Activated naive CD4-positive, alpha-beta T cell treated with anti-CD3 and anti-CD28 coated beads for 36 hours (primary cell): ENCODE measurements at regions of chr19 and their contacts with region 1.

Region 1: GRCh38 chr19:19663256-19664038 is at the start of gene ATP13A1:
- DNase-seq: peak; percentile 93
- H3K4me3 Mint-ChIP-seq: peak within 1 kb of the TSS; percentile 95
- H3K27ac Mint-ChIP-seq: peak within 1 kb of the TSS; percentile 97
- H3K4me1 Mint-ChIP-seq: peaks cover 34% of the 10 kb centered on the region
- H3K27me3 Mint-ChIP-seq: no peaks in the 10 kb centered on the region
- total RNA-seq, gene ATP13A1: 48.7 to 55.1 TPM

Region 2: GRCh38 chr19:19591133-19591825 is 72.2 kb before region 1 on chr19:
- CTCF ChIA-PET with region 1: no interaction called
- intact Hi-C with region 1: loop called (anchors 1 kb)
- DNase-seq: peak; percentile 91
- H3K4me3 Mint-ChIP-seq: peak overlapping the region; percentile 47
- H3K27ac Mint-ChIP-seq: peak overlapping the region; percentile 93
- H3K4me1 Mint-ChIP-seq: peaks cover 71% of the 10 kb centered on the region
- H3K27me3 Mint-ChIP-seq: no peaks in the 10 kb centered on the region

Region 3: DNA sequence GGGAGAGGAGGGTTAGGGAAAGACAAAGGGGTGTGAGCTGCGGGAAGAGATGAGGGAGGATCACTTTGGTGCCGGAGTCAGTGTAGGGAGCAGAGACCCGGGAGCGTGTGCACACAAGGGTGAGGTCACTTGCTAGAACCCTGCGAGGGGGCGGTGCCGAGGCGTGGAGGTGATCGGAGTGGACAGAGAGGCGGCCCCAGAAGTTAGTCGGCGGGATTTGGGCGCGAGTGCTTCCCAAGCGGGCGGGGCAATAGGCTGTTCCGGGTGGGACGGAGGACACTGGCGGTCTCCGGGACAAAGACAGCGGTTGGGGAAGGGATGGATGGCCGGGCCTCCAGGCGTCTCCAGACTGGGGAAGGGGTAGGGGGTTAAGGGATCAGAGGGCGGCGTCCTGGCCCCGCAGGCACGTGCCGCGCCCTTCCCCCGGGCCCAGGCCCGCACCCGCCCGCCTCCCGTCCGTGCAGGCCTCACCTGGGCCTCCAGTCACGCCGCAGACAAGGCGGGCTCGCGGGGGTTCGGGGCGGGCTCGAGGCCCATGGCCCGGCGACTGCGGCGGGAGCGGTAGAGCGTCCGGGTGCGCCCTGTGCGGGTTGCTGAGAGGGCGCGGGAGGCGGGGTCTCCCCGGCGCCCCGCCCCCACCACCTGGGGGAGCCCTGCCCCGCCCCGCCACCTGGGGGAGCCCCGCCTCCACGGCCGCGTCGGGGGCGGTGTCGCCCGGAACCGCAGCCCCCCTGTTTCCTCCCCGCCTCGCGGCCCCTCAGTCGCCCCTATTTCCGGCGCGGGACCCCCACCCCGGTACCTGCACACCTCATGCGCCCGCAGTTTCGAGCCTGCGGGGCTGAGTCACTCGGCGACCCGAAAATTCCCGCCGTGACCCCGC is 35.6 kb before region 1 on chr19 and contains the start of gene LPAR2:
- CTCF ChIA-PET with region 1: no interaction called
- intact Hi-C with region 1: loop called (anchors 1 kb)
- DNase-seq: peak; percentile 65
- H3K4me3 Mint-ChIP-seq: peak within 1 kb of the TSS; percentile 89
- H3K27ac Mint-ChIP-seq: peak within 1 kb of the TSS; percentile 85
- H3K4me1 Mint-ChIP-seq: peaks cover 29% of the 10 kb centered on the region
- H3K27me3 Mint-ChIP-seq: no peaks in the 10 kb centered on the region
- total RNA-seq, gene LPAR2: 20.2 to 20.7 TPM

Region 4: DNA sequence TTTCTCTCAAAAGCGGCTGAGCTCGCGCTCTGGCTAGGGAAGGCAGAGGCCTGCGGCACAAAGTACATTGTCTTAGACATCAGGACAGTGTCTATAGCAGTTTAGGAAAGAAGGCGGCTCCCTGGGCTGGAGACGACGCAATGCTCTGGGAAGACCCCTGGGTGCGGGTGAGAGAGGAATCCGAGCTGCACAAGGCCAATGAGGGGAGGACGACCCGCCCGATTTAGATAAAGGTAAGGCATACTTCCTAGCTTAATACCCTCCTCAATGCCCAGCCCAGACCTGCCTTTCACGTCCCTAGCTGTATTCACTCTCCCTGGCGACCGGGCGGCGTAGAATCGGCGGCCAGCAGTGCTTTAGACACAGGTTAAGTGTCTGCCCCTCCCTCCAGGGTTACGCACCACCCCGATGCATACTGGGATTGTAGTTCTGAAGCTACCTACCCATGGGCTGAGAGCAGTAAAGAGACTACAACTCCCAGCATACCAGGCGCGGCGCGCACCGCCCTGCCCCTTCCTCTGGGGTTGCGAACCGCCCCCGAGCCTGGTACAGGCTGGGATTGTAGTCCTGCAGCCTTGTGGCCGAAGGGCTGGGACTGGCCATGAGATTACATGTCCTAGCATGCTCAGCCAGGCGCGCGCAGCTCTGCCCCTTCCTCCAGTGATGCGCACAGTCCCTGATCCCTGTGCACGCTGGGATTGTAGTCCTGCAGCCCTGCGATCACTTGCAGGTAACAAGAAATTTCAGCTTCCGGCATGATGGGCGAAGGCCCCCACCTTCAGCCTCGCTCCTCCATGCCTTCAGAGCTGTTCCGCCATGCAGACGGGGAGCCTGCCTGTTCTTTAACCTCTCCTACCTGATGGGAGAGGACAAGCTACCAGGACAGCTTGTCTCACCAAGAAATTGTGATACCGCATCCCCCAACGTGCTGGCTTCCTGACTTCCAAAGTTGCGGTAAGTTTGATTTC is 112.9 kb after region 1 on chr19:
- CTCF ChIA-PET with region 1: no interaction called
- intact Hi-C with region 1: loop called (anchors 1 kb)
- DNase-seq: peak; percentile 95
- H3K4me3 Mint-ChIP-seq: peak overlapping the region; percentile 90
- H3K27ac Mint-ChIP-seq: peak overlapping the region; percentile 90
- H3K4me1 Mint-ChIP-seq: peaks cover 44% of the 10 kb centered on the region
- H3K27me3 Mint-ChIP-seq: no peaks in the 10 kb centered on the region

Region 5: DNA sequence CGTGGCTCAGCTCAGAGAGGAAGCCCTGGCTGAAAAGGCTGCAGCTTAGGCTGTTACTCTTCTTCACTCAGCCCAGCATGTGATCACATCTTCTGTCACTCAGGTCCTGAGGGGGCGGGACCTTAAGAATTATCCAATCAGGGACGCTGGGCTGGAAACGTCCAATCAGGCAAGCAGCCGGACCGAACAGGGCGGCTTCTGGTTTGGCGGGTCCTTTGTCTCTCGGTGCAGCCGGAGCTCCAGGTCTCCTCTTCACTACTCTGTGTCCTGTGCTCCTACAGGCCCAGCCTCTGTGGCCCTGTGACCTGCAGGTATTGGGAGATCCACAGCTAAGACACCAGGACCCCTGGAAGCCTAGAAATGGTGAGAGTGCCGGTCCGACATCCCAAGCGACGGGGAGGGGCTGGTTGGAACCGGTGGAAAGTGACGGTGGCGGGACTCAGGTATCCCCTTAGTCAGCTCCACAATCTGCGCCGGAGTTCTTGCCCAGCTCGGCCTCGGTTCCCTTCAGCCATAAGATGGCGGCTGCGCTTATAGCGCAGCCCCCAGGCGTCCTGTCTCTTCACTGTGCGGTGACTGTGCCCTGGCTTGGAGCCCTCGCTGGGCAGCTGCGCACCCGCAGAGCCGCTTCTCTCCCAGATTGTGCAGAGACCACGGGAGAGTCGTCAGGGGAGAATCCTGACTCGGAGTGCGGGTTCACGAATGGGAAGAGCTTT is 237.4 kb after region 1 on chr19 and contains the start of gene ZNF93:
- CTCF ChIA-PET with region 1: interaction called, 4 read pairs
- intact Hi-C with region 1: loop called (anchors 2 kb)
- DNase-seq: peak; percentile 98
- H3K4me3 Mint-ChIP-seq: peak within 1 kb of the TSS; percentile 97
- H3K27ac Mint-ChIP-seq: peak within 1 kb of the TSS; percentile 95
- H3K4me1 Mint-ChIP-seq: peaks cover 28% of the 10 kb centered on the region
- H3K27me3 Mint-ChIP-seq: no peaks in the 10 kb centered on the region
- total RNA-seq, gene ZNF93: 15.2 to 16.6 TPM

Region 6: GRCh38 chr19:20051841-20052768 is 388.7 kb after region 1 on chr19:
- CTCF ChIA-PET with region 1: no interaction called
- intact Hi-C with region 1: loop called (anchors 5 kb)
- DNase-seq: peak; percentile 87
- H3K4me3 Mint-ChIP-seq: peak overlapping the region; percentile 95
- H3K27ac Mint-ChIP-seq: peak overlapping the region; percentile 86
- H3K4me1 Mint-ChIP-seq: peaks cover 6% of the 10 kb centered on the region
- H3K27me3 Mint-ChIP-seq: no peaks in the 10 kb centered on the region